ENCODE measurements at regions of chr22 and their contacts with region 1.

Region 1: GRCh38 chr22:22408731-22409696 is 99.5 kb downstream of the ZNF280B start:
- DNase-seq: peak; percentile 33
- ATAC-seq: peak; percentile 100
- H3K4me3 ChIP-seq: no peak overlapping the region
- H3K27ac ChIP-seq: no peak overlapping the region
- H3K4me1 ChIP-seq: no peaks in the 10 kb centered on the region
- H3K27me3 ChIP-seq: peaks cover 52% of the 10 kb centered on the region
- CTCF ChIP-seq: peak; percentile 38 to 77 (median 68); a peak in 5 of 6 replicates
- POLR2A ChIP-seq: no peak
- RAD21 ChIP-seq: peak; percentile 46

Region 2: DNA sequence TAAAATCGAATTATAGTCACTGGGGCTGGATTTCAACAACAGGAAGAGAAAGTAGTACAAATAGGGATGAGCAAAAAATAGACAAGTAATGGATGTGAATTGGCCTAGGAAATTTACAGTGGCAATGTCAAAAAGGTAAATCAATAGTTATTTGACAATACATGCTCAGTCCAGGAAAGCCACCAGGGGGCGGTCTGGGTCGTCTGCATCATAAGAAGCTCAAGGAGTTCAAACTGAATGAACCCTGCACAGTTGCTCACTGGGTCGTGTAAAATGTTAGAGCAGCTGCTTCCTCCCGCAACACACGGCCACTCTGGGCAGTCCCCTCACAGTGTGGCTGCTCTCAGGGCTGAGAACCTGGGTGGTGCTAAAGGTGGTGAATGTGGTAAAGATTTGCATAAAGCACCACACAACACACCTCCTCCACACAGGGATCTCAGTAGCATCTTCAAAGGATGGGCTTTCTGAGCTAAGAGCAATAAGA is 13.7 kb after region 1 on chr22:
- CTCF ChIA-PET with region 1: interaction called, 25 read pairs
- POLR2A ChIA-PET with region 1: no interaction called
- RAD21 ChIA-PET with region 1: no interaction called
- intact Hi-C with region 1: no loop called
- DNase-seq: peak; percentile 56
- ATAC-seq: peak; percentile 92
- H3K4me3 ChIP-seq: no peak overlapping the region
- H3K27ac ChIP-seq: no peak overlapping the region
- H3K4me1 ChIP-seq: peaks cover 0 to 3% of the 10 kb centered on the region in 2 experiments; a peak in 1 of 4 replicates
- H3K27me3 ChIP-seq: peaks cover 56% of the 10 kb centered on the region
- CTCF ChIP-seq: peak; percentile 35 to 94 (median 86); a peak in 5 of 6 replicates
- POLR2A ChIP-seq: no peak
- RAD21 ChIP-seq: peak; percentile 30; the same call in 1 of the 2 replicates

Measured in HCT116 (cell line).